Activated CD4-positive, alpha-beta T cell treated with anti-CD3 and anti-CD28 coated beads for 36 hours (primary cell): ENCODE measurements at regions of chr11 and their contacts with region 1.

Region 1: DNA sequence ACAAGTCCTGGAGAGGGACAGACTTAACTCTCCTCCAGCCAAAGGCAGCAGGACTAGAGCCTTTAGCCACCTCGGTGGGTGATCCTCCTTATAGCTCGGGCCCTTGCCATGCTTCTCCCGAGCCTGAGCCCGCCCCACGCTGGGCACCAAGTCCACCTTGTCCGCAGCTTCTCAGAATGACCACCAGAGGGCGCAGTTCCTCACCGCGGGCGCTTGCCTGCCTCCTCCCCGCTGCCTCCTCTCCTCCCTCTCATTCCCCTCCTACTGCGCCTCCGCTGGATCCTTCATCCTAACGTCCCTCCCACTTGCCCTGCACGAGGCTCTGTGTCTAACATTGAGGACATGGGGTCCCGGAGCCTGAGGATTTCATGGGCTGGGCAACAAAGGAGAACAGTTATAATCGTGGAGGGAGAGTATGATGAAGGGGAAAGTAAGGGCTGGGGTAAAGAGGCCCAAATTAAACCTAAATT is 11.3 kb upstream of the MOGAT2 start:
- DNase-seq: peak; percentile 82
- ATAC-seq: peak; percentile 96
- H3K4me3 Mint-ChIP-seq: no peak overlapping the region
- H3K27ac Mint-ChIP-seq: no peak overlapping the region
- H3K4me1 Mint-ChIP-seq: peaks cover 10% of the 10 kb centered on the region
- H3K27me3 Mint-ChIP-seq: peaks cover 9% of the 10 kb centered on the region

Region 2: GRCh38 chr11:76557466-76557865 is 851.2 kb after region 1 on chr11:
- CTCF ChIA-PET with region 1: no interaction called
- POLR2A ChIA-PET with region 1: interaction called, 12 read pairs
- intact Hi-C with region 1: no loop called
- DNase-seq: no peak
- ATAC-seq: no peak
- H3K4me3 Mint-ChIP-seq: no peak overlapping the region
- H3K27ac Mint-ChIP-seq: no peak overlapping the region
- H3K4me1 Mint-ChIP-seq: peaks cover 18% of the 10 kb centered on the region
- H3K27me3 Mint-ChIP-seq: peaks cover 7% of the 10 kb centered on the region